Breast epithelium (tissue), 4 donors: ENCODE measurements at regions of chr4 and their contacts with region 1.

Region 1: DNA sequence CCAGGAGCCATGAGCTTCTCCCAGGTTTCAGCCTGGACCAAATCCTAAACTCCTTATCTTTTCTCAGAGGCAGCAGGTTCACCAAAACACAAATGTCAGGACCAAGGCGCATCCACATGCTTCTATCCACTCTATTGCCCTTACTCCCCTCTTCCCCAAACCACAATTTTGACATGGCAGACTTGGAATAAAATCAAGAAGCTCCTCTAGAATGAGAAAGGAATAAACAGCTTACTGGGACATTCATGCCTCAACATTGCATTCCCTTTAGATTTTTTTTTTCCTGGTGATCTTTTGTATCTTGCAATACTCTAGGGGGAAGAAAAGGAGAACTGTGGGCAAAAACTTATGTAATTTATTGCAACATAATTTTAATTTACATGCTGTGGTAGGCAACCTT is 119.1 kb downstream of the TSPAN5 start:
- DNase-seq: no peak
- H3K4me3 ChIP-seq: no peak overlapping the region
- H3K27ac ChIP-seq: no peak overlapping the region
- H3K4me1 ChIP-seq: no peaks in the 10 kb centered on the region
- H3K27me3 ChIP-seq: no peaks in the 10 kb centered on the region
- CTCF ChIP-seq: no peak
- POLR2A ChIP-seq: no peak

Region 2: GRCh38 chr4:98305576-98305975 is 233.7 kb before region 1 on chr4:
- intact Hi-C with region 1: no loop called
- DNase-seq: no peak
- H3K4me3 ChIP-seq: no peak overlapping the region
- H3K27ac ChIP-seq: no peak overlapping the region
- H3K4me1 ChIP-seq: no peaks in the 10 kb centered on the region
- H3K27me3 ChIP-seq: no peaks in the 10 kb centered on the region
- CTCF ChIP-seq: no peak
- POLR2A ChIP-seq: no peak

Region 3: DNA sequence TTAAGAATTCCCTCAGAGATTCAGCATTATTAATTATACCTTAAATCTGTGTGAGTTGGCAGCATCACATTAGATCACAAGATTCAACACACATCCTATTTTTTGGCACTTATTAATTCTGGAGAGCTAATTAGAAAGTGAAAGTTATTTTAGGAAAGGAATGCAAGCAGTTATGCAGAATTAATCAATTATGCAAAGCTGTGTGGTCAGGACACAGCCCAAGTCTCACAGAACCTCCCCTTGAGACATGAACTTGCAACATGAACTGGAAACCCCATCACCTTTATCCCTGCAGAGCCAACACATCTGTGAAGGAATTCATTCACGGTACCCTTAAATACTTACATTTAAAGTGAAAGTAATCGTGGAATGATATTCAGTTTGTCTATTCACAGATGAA is 38.7 kb after region 1 on chr4:
- intact Hi-C with region 1: loop called (anchors 5 kb)
- DNase-seq: no peak
- H3K4me3 ChIP-seq: peak overlapping the region in 1 of 3 donors; percentile 24
- H3K27ac ChIP-seq: peak overlapping the region in 1 of 2 donors; percentile 5
- H3K4me1 ChIP-seq: no peaks in the 10 kb centered on the region
- H3K27me3 ChIP-seq: no peaks in the 10 kb centered on the region
- CTCF ChIP-seq: no peak
- POLR2A ChIP-seq: no peak